Activated CD4-positive, alpha-beta memory T cell treated with anti-CD3 and anti-CD28 coated beads for 36 hours (primary cell): ENCODE measurements at regions of chr1 and their contacts with region 1.

Region 1: GRCh38 chr1:63691701-63692425 is 82.0 kb upstream of the ROR1 start:
- DNase-seq: peak; percentile 35
- H3K4me3 Mint-ChIP-seq: no peak overlapping the region
- H3K27ac Mint-ChIP-seq: no peak overlapping the region
- H3K4me1 Mint-ChIP-seq: no peaks in the 10 kb centered on the region
- H3K27me3 Mint-ChIP-seq: no peaks in the 10 kb centered on the region

Region 2: GRCh38 chr1:63615768-63616420 is 76.0 kb before region 1 on chr1:
- CTCF ChIA-PET with region 1: interaction called, 7 read pairs
- POLR2A ChIA-PET with region 1: no interaction called
- intact Hi-C with region 1: loop called (anchors 5 kb)
- DNase-seq: peak; percentile 48
- H3K4me3 Mint-ChIP-seq: no peak overlapping the region
- H3K27ac Mint-ChIP-seq: no peak overlapping the region
- H3K4me1 Mint-ChIP-seq: peaks cover 3% of the 10 kb centered on the region
- H3K27me3 Mint-ChIP-seq: no peaks in the 10 kb centered on the region

Region 3: GRCh38 chr1:63630666-63631065 is 61.2 kb before region 1 on chr1:
- CTCF ChIA-PET with region 1: no interaction called
- POLR2A ChIA-PET with region 1: no interaction called
- intact Hi-C with region 1: no loop called
- DNase-seq: no peak
- H3K4me3 Mint-ChIP-seq: no peak overlapping the region
- H3K27ac Mint-ChIP-seq: no peak overlapping the region
- H3K4me1 Mint-ChIP-seq: peaks cover 5% of the 10 kb centered on the region
- H3K27me3 Mint-ChIP-seq: no peaks in the 10 kb centered on the region

Region 4: DNA sequence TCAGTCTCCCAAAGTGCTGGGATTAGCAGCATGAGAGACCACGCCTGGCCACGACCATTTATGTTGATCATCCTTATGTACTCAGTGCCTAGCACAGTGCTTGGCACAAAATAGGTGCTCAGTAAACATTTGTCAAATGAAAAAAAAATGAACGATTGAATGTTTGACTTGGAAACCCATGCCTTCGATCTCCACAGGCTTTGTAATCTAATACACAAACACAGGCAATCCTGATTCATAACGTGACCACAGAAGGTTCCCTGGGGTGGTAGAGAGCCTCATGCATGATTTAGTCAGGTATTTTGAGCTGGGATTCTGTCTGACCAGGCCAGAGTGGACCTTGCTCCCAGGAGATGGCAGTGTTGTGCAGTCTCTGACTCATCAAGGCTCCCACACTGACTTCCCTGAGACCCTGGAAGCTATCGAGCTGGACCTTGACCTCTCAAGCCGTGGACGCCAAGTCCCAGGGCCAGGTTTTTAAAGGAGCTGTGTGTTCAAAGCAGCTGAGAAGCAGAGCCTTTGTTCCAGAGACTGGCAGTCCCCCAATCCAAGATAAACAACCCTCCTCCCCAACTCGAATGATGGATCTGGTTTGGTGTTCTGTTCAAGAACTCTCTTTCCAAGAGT is 17.5 kb before region 1 on chr1:
- CTCF ChIA-PET with region 1: interaction called, 10 read pairs
- POLR2A ChIA-PET with region 1: no interaction called
- intact Hi-C with region 1: no loop called
- DNase-seq: peak; percentile 28
- H3K4me3 Mint-ChIP-seq: no peak overlapping the region
- H3K27ac Mint-ChIP-seq: no peak overlapping the region
- H3K4me1 Mint-ChIP-seq: no peaks in the 10 kb centered on the region
- H3K27me3 Mint-ChIP-seq: no peaks in the 10 kb centered on the region

Region 5: DNA sequence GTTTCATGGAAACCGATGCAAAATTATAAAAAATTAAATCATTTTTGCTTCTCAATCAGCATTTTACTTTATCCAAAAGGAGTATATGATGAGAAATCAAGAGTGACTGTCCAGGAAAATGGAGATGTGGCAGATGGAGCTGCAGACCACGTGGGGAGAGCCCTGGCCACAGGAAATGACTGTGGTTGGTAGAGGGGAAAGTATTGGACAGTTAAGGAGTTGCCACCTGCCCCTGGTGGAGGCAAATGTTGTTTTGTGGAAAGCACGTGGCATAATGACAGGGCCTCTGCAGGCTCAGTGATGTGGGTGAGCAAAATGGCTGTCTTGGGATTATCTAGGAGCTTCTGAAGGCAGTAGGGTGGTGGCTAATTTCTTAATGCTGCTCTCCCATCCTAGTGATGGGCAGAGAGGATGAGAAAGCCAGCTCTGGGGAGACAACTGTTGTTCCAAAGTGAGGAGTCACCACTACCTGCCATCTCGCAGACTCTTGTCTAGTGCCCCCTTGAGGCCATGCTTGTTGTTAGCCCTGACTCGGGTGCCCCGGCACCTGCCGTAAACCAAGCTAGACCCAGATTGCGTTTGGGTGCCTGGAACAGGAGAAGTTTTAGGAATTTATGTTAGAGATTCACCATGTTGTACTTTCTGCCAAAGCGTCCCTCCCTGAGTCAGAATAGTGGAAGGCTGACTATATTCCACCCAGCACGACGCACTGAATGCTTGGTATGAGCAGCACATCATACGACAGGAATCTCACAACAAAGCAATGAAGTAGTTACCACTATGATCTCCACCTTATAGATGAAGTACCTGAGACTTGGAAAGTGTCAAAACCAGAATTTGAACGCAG is 225.9 kb after region 1 on chr1:
- CTCF ChIA-PET with region 1: interaction called, 8 read pairs
- POLR2A ChIA-PET with region 1: no interaction called
- intact Hi-C with region 1: loop called (anchors 2 kb)
- DNase-seq: peak; percentile 35
- H3K4me3 Mint-ChIP-seq: no peak overlapping the region
- H3K27ac Mint-ChIP-seq: no peak overlapping the region
- H3K4me1 Mint-ChIP-seq: no peaks in the 10 kb centered on the region
- H3K27me3 Mint-ChIP-seq: peaks cover 1% of the 10 kb centered on the region

Region 6: GRCh38 chr1:64038965-64039926 is 347.4 kb after region 1 on chr1:
- CTCF ChIA-PET with region 1: no interaction called
- POLR2A ChIA-PET with region 1: no interaction called
- intact Hi-C with region 1: no loop called
- DNase-seq: no peak
- H3K4me3 Mint-ChIP-seq: no peak overlapping the region
- H3K27ac Mint-ChIP-seq: no peak overlapping the region
- H3K4me1 Mint-ChIP-seq: no peaks in the 10 kb centered on the region
- H3K27me3 Mint-ChIP-seq: peaks cover 6% of the 10 kb centered on the region